ENCODE measurements at regions of chr16 and their contacts with region 1.

Region 1: GRCh38 chr16:57757326-57757786 is 21.8 kb downstream of the KATNB1 start:
- DNase-seq: peak; percentile 94
- H3K4me3 ChIP-seq: no peak overlapping the region
- H3K27ac ChIP-seq: no peak overlapping the region
- H3K4me1 ChIP-seq: no peaks in the 10 kb centered on the region
- H3K27me3 ChIP-seq: no peaks in the 10 kb centered on the region
- CTCF ChIP-seq: peak; percentile 98

Region 2: GRCh38 chr16:57677622-57678369 is 79.6 kb before region 1 on chr16:
- intact Hi-C with region 1: no loop called
- DNase-seq: no peak
- H3K4me3 ChIP-seq: no peak overlapping the region
- H3K27ac ChIP-seq: no peak overlapping the region
- H3K4me1 ChIP-seq: no peaks in the 10 kb centered on the region
- H3K27me3 ChIP-seq: no peaks in the 10 kb centered on the region
- CTCF ChIP-seq: no peak

Region 3: GRCh38 chr16:57863434-57864160 is 106.2 kb after region 1 on chr16:
- intact Hi-C with region 1: loop called (anchors 2 kb)
- DNase-seq: peak; percentile 58
- H3K4me3 ChIP-seq: no peak overlapping the region
- H3K27ac ChIP-seq: no peak overlapping the region
- H3K4me1 ChIP-seq: no peaks in the 10 kb centered on the region
- H3K27me3 ChIP-seq: no peaks in the 10 kb centered on the region
- CTCF ChIP-seq: peak; percentile 51

Region 4: DNA sequence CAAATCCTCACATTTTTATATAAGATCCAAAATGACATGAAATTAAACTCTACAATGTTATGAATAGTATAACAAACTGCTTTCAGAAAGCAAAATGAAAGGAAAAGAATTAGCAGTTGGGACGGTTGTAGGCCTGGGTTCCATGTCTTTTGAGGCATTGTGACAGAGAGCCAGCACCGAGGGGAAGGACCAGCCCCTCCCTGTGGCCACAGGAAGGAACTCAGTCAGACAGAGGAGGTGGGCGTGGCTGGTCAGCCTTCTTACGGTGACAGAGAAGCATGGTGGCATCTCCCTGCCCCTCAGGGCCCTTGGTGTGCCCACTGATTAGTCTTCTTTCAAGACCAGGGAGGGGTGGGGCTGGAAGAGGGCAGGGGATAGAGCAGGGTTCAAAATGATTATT is 237.4 kb after region 1 on chr16:
- intact Hi-C with region 1: loop called (anchors 10 kb)
- DNase-seq: peak; percentile 55
- H3K4me3 ChIP-seq: no peak overlapping the region
- H3K27ac ChIP-seq: no peak overlapping the region
- H3K4me1 ChIP-seq: no peaks in the 10 kb centered on the region
- H3K27me3 ChIP-seq: no peaks in the 10 kb centered on the region
- CTCF ChIP-seq: peak; percentile 28

Measured in colonic mucosa (tissue), 4 donors.